Head of caudate nucleus (tissue), 42 donors: ENCODE measurements at regions of chr5 and their contacts with region 1.

Region 1: DNA sequence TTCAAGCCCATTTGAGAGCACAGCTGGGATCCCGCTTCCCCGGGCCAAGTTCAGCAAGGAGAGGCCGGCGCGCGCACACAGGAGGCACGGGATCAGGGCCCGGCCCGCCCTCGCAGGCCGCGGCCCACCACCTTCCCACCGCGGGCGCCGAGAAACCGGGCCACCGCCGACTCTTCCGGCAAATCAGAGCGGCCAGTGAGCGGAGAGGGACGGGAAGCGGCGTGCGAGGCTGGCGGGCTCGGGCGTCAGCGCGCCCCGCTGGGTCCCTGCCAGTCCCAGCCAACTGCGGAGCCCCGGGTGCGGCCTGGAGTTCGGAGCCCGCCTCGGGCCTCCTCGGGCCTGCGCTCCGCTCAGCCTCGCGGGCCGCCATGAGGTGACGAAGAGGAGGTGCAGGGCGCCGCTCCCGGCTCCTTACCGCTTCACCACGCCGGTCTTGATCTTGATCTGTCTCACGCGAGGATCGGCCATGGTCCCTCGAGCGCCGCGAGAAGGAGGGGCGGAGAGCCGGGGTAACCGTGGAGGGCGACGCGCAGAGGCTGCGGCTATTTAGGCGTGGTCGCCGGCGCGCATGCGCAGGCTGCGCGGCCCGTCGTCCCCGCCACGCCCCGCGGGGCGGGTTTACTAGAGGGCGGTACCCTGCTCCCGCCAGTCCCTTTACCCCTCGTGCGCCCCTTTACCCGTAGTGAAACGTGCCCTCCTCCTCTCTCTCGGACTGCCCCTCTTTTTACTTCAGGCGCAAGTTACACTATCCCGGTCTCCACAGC is at the start of gene TBCA:
- DNase-seq: peak; percentile 51 to 94 (median 88)

Region 2: DNA sequence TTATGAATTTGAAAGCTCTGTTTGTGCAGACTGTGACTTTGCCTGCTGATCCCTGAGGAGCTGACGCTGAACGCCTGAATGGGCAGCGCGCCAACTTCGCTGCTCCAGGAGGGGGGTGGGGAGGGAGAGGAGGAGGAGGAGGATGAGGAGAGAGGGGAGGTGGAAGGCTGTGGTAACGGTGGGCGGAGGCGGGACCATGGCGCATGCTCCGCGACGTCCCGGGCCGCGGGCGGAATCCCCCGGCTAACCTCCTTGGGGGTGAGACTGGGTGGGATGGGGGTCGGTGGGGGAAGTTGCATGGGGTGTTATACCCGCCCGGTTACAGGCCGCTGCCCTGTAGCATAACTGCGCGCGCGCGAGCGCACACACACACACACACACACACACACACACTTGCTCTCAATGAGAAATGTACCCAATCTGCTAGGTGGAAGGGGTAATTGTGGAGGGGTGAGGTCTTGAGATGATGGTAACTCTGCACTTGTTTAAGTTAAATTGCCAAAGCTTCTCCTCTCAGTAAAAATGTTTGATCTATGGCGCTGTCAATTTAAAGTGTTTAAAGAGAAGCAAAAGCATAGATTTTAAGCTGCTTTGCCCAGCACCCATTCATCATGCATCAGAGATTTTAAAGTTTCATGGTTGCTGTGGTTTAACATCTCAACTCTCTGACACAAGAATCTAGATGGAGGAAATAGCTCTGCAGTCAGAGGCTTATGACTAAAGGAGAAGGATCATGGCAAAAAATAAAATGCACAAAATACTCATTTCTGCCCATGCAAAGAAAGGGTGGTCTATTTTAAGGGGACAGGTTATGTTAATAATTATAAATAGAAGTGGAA is 76.8 kb after region 1 on chr5:
- intact Hi-C with region 1: loop called (anchors 5 kb)
- DNase-seq: peak; percentile 50 to 93 (median 84)

Region 3: DNA sequence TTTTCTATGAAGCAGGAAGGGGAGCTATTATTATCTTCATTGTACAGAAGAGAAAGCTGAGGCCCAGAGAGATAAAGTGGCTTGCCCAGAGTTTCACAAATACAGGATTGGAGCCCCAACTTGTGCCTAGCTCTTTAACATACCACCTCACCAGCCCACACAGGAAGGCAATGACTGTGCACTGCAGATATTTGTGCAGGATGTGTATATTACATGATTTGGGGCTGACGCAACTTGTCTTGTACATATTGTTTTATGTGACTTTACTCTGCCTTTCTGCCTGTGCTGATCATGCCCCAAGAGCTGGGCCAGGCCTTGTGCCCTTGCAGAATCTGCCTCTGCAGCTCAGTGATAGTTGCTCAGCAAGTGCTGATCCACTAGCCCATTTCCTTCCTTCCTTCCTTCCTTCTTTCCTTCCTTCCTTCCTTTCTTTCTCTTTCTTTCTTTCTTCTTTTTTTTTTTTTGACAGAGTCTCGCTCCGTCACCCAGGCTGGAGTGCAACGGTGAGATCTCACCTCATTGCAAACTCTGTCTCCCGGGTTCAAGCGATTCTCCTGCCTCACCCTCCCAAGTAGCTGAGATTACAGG is 106.8 kb after region 1 on chr5:
- intact Hi-C with region 1: no loop called
- DNase-seq: peak in 1 of 42 donors; percentile 28